GM13977 (cell line): ENCODE measurements at regions of chr19 and their contacts with region 1.

Region 1: GRCh38 chr19:9323919-9324583 is at the start of gene ZNF559:
- DNase-seq: peak; percentile 94
- CTCF ChIP-seq: peak; percentile 17

Region 2: GRCh38 chr19:9070066-9070465 is 254.0 kb before region 1 on chr19:
- in situ Hi-C with region 1: no loop called
- DNase-seq: no peak
- CTCF ChIP-seq: no peak

Region 3: DNA sequence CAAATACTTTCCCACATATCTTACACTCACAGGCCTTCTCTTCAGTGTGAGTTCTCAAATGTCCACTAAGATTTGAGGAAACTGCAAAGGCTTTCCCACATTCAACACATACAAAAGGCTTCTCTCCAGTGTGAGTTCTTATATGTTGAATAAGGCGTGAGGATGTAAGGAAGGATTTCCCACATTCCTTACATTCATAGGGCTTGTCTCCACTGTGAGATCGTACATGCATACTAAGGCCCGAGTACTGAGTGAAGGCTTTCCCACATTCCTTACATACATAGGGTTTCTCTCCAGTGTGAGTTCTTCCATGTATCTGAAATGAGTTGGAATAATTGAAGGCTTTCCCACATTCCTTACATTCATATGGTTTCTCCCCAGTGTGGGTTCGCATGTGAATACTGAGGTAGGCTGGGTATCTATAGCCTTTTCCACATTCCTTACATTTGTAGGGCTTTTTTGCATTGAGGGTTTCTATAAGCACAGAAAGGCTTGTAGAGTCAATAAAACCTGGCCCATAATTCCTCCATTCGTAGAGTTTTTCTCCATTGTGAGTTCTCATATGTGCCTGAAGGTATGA is 204.8 kb after region 1 on chr19:
- in situ Hi-C with region 1: no loop called
- DNase-seq: no peak
- CTCF ChIP-seq: no peak

Region 4: DNA sequence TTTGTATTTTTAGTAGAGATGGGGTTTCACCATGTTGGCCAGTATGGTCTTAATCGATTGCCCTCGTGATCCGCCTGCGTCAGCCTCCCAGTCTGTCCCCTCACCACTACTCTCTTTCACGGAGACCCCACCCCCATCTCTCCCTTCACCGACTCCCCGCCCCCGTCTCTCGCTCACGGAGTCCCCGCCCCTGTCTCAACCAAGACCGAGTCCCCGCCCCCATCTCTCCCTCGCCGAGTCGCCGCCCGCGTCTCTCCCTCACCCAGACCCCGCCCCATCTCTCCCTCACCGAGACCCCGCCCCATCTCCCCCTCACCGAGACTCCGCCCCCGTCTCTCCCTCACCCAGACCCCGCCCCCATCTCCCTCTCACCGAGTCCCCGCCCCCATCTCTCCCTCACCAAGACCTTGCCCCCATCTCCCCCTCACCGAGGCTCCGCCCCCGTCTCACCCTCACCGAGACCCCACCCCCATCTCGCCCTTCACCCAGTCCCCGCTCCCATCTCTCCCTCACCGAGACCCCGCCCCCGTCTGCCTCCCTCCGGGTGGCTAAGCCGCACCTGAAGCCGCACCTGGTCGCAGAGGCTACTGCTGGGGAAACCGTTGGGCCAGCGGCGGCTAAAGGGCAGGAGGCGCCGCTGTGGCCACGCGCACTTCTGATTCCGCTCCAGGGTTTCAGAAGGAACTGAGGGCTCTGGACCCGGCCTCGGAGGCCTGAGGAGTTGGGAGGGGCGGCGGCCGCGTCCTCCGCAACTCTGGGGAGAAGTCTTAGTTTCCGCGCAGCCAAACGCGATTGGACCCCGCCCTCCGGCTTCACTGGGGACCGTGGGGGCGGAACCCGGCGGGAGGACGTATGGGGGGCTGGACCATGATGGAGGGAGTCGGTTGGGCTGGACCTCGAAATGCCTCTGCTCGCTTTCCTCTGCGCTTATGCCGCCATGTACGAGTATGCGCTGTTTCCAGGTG is 461.6 kb after region 1 on chr19:
- in situ Hi-C with region 1: loop called (anchors 25 kb)
- DNase-seq: peak; percentile 94
- CTCF ChIP-seq: no peak